ENCODE measurements at regions of chr5 and their contacts with region 1.

Region 1: DNA sequence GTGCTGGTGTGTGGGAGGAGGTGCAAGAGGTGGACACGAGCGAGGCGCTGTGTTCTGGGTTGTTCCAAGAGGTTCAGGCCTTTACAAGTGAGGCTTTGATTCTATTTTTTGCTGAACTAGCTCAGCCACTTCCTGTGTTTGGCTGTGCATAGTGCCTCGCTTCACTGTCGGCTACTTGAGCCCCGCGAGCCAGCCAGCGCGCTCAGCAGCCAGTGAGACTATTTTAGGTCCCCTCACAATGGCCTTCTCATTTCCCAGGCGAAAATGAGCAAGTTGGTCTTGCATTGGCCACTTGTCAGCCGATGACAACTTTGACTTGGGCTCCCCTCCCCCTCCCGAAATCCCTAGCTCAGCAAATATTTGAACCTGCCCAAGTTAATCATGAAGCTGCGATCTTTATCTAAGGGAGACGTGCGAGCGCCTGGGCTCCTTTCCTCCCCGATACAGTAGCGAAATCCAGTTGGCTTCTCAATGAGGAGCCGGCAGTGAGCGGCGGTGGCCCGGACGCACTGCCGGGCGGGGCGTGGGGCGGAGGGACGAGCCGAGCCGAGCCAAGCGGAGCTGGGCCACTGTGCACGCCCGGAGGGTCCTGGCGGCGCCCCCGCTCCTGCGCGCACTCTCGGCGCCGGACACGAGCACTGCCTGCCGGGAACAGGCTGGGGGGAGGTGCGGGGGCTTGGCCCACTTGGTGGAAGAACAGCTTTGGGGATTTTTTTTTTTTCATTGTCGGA is 72.6 kb downstream of the PIK3R1 start:
- DNase-seq: peak in 1 of 2 experiments; percentile 76
- H3K4me3 ChIP-seq: peak overlapping the region; percentile 59 to 72 (median 65)
- H3K27ac ChIP-seq: no peak overlapping the region
- H3K4me1 ChIP-seq: peaks cover 3 to 7% (median 5%) of the 10 kb centered on the region in 4 experiments; a peak in 5 of 7 replicates
- H3K27me3 ChIP-seq: no peaks in the 10 kb centered on the region
- CTCF ChIP-seq: no peak
- EP300 ChIP-seq: no peak
- POLR2A ChIP-seq: no peak
- RAD21 ChIP-seq: no peak; a peak in 1 of 4 replicates

Region 2: DNA sequence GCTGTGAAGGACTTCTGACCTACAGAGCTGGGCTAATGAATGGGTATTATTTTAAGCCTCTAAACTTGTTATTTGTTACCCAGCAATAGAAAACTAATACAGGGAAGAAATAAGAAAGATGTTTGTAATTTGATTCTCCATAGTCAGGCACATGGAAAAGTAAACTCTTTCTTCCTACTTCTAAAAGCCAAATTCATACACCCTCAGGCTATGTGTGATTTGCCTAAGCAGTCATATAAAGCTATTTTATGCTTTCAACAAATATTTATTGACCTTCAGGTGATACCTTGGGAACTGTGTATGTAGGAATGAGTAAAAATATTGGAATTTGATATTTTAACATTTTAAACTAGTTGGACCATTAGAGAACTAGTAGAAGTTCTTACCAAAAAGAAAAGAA is 191.1 kb before region 1 on chr5:
- CTCF ChIA-PET with region 1: no interaction called
- POLR2A ChIA-PET with region 1: no interaction called
- DNase-seq: no peak
- H3K4me3 ChIP-seq: no peak overlapping the region
- H3K27ac ChIP-seq: no peak overlapping the region
- H3K4me1 ChIP-seq: no peaks in the 10 kb centered on the region
- H3K27me3 ChIP-seq: no peaks in the 10 kb centered on the region
- CTCF ChIP-seq: no peak
- EP300 ChIP-seq: no peak
- POLR2A ChIP-seq: no peak
- RAD21 ChIP-seq: no peak

Region 3: GRCh38 chr5:68299575-68299974 is 11.4 kb after region 1 on chr5:
- CTCF ChIA-PET with region 1: interaction called, 14 read pairs
- POLR2A ChIA-PET with region 1: no interaction called
- DNase-seq: no peak
- H3K4me3 ChIP-seq: no peak overlapping the region
- H3K27ac ChIP-seq: no peak overlapping the region
- H3K4me1 ChIP-seq: no peaks in the 10 kb centered on the region
- H3K27me3 ChIP-seq: no peaks in the 10 kb centered on the region
- CTCF ChIP-seq: no peak
- EP300 ChIP-seq: no peak
- POLR2A ChIP-seq: no peak
- RAD21 ChIP-seq: no peak

Region 4: GRCh38 chr5:68460147-68460798 is 172.1 kb after region 1 on chr5:
- CTCF ChIA-PET with region 1: interaction called, 10 read pairs
- POLR2A ChIA-PET with region 1: no interaction called
- DNase-seq: no peak
- H3K4me3 ChIP-seq: no peak overlapping the region
- H3K27ac ChIP-seq: no peak overlapping the region
- H3K4me1 ChIP-seq: peaks cover 0 to 6% (median 3%) of the 10 kb centered on the region in 4 experiments; a peak in 2 of 7 replicates
- H3K27me3 ChIP-seq: no peaks in the 10 kb centered on the region
- CTCF ChIP-seq: peak in 2 of 3 experiments; percentile 44 to 59; a peak in 2 of 4 replicates
- EP300 ChIP-seq: no peak
- POLR2A ChIP-seq: no peak
- RAD21 ChIP-seq: peak; percentile 66 to 69

Region 5: GRCh38 chr5:68490406-68490805 is 202.3 kb after region 1 on chr5:
- CTCF ChIA-PET with region 1: no interaction called
- POLR2A ChIA-PET with region 1: no interaction called
- DNase-seq: no peak
- H3K4me3 ChIP-seq: no peak overlapping the region
- H3K27ac ChIP-seq: no peak overlapping the region
- H3K4me1 ChIP-seq: peaks cover 0 to 3% (median 0%) of the 10 kb centered on the region in 4 experiments; a peak in 2 of 7 replicates
- H3K27me3 ChIP-seq: no peaks in the 10 kb centered on the region
- CTCF ChIP-seq: no peak
- EP300 ChIP-seq: no peak
- POLR2A ChIP-seq: no peak
- RAD21 ChIP-seq: no peak

Measured in H1 (cell line).